Caco-2 (cell line): ENCODE measurements at regions of chr6 and their contacts with region 1.

Region 1: DNA sequence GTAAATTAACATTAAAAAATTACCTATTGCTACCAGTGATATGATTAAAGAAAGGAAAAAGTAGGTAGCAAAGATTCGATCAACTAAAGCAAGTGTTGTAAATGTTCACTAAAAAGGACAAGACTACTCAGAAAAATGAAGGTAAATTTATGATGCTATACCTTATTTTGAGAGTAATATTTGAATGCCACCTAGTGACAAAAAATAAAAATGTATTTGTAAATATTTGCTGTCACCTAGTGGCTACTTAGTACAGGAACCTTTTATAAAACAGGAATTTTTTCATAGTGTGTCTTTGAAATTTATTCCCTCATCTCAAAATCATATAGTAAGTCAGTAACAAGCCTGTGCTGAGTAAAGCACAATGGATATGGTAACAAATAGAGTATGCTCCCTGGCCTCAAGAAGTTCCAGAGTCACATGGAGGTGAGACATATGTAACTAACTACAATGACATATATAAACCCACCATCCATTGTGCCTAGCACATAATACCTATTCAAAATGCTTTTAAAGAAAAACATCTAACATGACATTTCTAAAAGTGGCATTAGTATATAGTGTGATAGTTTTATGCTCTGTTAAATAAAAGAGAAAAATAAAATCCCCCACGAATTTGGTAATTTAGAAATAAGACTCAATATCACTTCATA is 193.1 kb upstream of the SIM1 start:
- DNase-seq: no peak
- H3K4me3 ChIP-seq: no peak overlapping the region
- H3K4me3 Mint-ChIP-seq: no peak overlapping the region
- H3K27ac Mint-ChIP-seq: no peak overlapping the region
- H3K4me1 ChIP-seq: no peaks in the 10 kb centered on the region; the same call in 1 of the 2 replicates
- H3K4me1 Mint-ChIP-seq: peaks cover 2% of the 10 kb centered on the region
- H3K27me3 ChIP-seq: no peaks in the 10 kb centered on the region
- H3K27me3 Mint-ChIP-seq: no peaks in the 10 kb centered on the region
- CTCF ChIP-seq: peak; percentile 68 to 73

Region 2: GRCh38 chr6:99868074-99868702 is 789.6 kb before region 1 on chr6:
- CTCF ChIA-PET with region 1: no interaction called
- POLR2A ChIA-PET with region 1: no interaction called
- intact Hi-C with region 1: loop called (anchors 10 kb)
- DNase-seq: peak; percentile 56 to 76
- H3K4me3 ChIP-seq: no peak overlapping the region
- H3K4me3 Mint-ChIP-seq: no peak overlapping the region
- H3K27ac Mint-ChIP-seq: no peak overlapping the region
- H3K4me1 ChIP-seq: no peaks in the 10 kb centered on the region
- H3K4me1 Mint-ChIP-seq: no peaks in the 10 kb centered on the region
- H3K27me3 ChIP-seq: peaks cover 2% of the 10 kb centered on the region; the same call in 1 of the 2 replicates
- H3K27me3 Mint-ChIP-seq: peaks cover 12% of the 10 kb centered on the region
- CTCF ChIP-seq: peak; percentile 85 to 87

Region 3: GRCh38 chr6:100105138-100105753 is 552.6 kb before region 1 on chr6:
- CTCF ChIA-PET with region 1: interaction called, 4 read pairs
- POLR2A ChIA-PET with region 1: no interaction called
- intact Hi-C with region 1: loop called (anchors 1 kb)
- DNase-seq: no peak
- H3K4me3 ChIP-seq: no peak overlapping the region
- H3K4me3 Mint-ChIP-seq: no peak overlapping the region
- H3K27ac Mint-ChIP-seq: no peak overlapping the region
- H3K4me1 ChIP-seq: no peaks in the 10 kb centered on the region
- H3K4me1 Mint-ChIP-seq: no peaks in the 10 kb centered on the region
- H3K27me3 ChIP-seq: no peaks in the 10 kb centered on the region
- H3K27me3 Mint-ChIP-seq: no peaks in the 10 kb centered on the region
- CTCF ChIP-seq: no peak

Region 4: DNA sequence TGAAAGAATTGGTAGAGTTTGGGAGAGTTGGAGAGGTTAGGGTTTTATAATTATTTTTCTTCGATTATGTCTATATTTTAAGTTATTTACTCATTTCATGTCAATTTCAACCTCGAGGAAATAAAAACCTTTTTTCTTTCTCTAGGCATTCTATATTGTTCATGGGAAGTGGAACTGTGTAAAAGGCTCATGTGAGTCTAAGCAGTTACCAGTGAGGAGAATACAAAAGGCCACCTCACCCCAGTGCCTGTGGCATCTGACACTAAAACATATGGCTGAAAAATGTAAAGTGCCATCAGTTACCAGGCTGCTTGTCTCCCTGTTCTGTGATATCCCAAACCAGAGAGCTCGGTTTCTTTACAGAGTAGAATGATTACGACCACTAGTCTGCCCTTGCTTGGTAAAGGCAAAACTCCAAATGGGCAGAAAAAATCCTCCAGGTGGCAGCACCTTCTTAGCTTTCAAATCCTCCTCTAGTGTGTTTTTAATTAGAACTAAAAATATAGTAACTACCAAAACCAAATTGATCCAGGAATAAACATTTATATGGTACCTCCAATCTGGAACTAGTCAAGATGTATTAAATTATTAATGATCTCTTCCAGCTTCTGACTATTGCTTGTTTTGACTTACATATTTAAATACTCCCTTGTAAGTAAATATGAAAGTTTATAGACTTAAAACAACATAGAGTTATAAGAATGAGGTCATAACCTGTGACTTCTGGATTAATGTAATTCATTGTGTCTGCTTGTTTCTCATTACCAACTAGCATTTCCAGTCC is 541.2 kb before region 1 on chr6:
- CTCF ChIA-PET with region 1: no interaction called
- POLR2A ChIA-PET with region 1: no interaction called
- intact Hi-C with region 1: loop called (anchors 1 kb)
- DNase-seq: peak; percentile 43 to 57
- H3K4me3 ChIP-seq: no peak overlapping the region
- H3K4me3 Mint-ChIP-seq: no peak overlapping the region
- H3K27ac Mint-ChIP-seq: no peak overlapping the region
- H3K4me1 ChIP-seq: no peaks in the 10 kb centered on the region
- H3K4me1 Mint-ChIP-seq: no peaks in the 10 kb centered on the region
- H3K27me3 ChIP-seq: no peaks in the 10 kb centered on the region
- H3K27me3 Mint-ChIP-seq: no peaks in the 10 kb centered on the region
- CTCF ChIP-seq: peak; percentile 52 to 70

Region 5: GRCh38 chr6:100176311-100176950 is 481.4 kb before region 1 on chr6:
- CTCF ChIA-PET with region 1: no interaction called
- POLR2A ChIA-PET with region 1: no interaction called
- intact Hi-C with region 1: loop called (anchors 1 kb)
- DNase-seq: peak; percentile 35 to 42
- H3K4me3 ChIP-seq: no peak overlapping the region
- H3K4me3 Mint-ChIP-seq: no peak overlapping the region
- H3K27ac Mint-ChIP-seq: no peak overlapping the region
- H3K4me1 ChIP-seq: no peaks in the 10 kb centered on the region
- H3K4me1 Mint-ChIP-seq: peaks cover 8% of the 10 kb centered on the region
- H3K27me3 ChIP-seq: no peaks in the 10 kb centered on the region
- H3K27me3 Mint-ChIP-seq: no peaks in the 10 kb centered on the region
- CTCF ChIP-seq: peak; percentile 34 to 37

Region 6: DNA sequence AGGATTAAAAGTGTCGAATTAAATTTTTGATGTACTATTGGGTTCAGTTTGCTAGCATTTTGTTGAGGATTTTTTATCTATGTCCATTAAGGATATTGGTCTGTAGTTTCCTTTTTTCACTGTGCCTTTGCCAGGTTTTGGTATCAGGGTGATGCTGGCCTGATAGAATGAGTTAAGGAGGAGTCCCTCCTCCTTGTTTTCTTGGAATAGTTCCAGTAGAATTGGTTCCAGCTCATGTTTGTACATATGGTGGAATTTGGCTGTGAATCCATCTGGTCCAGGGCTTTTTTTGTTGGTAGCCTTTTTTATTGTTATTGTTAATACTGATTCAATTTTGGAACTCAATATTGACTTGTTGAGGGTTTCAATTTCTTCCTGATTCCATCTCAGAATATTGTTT is 334.9 kb before region 1 on chr6:
- CTCF ChIA-PET with region 1: no interaction called
- POLR2A ChIA-PET with region 1: no interaction called
- intact Hi-C with region 1: loop called (anchors 1 kb)
- DNase-seq: no peak
- H3K4me3 ChIP-seq: no peak overlapping the region
- H3K4me3 Mint-ChIP-seq: no peak overlapping the region
- H3K27ac Mint-ChIP-seq: no peak overlapping the region
- H3K4me1 ChIP-seq: no peaks in the 10 kb centered on the region
- H3K4me1 Mint-ChIP-seq: no peaks in the 10 kb centered on the region
- H3K27me3 ChIP-seq: no peaks in the 10 kb centered on the region; the same call in 1 of the 2 replicates
- H3K27me3 Mint-ChIP-seq: no peaks in the 10 kb centered on the region
- CTCF ChIP-seq: no peak

Region 7: GRCh38 chr6:100493227-100493911 is 164.4 kb before region 1 on chr6:
- CTCF ChIA-PET with region 1: no interaction called
- POLR2A ChIA-PET with region 1: no interaction called
- intact Hi-C with region 1: loop called (anchors 5 kb)
- DNase-seq: peak in 1 of 2 experiments; percentile 25
- H3K4me3 ChIP-seq: no peak overlapping the region
- H3K4me3 Mint-ChIP-seq: no peak overlapping the region
- H3K27ac Mint-ChIP-seq: no peak overlapping the region
- H3K4me1 ChIP-seq: 0 out of 2 replicates have a peak, but pooled peaks cover 3% of the 10 kb centered on the region
- H3K4me1 Mint-ChIP-seq: peaks cover 13% of the 10 kb centered on the region
- H3K27me3 ChIP-seq: no peaks in the 10 kb centered on the region
- H3K27me3 Mint-ChIP-seq: no peaks in the 10 kb centered on the region
- CTCF ChIP-seq: no peak